Sigmoid colon (tissue), 7 donors: ENCODE measurements at regions of chr11 and their contacts with region 1.

Region 1: GRCh38 chr11:65274735-65275682 is 13.2 kb downstream of the POLA2 start:
- DNase-seq: peak; percentile 93
- H3K4me3 ChIP-seq: no peak overlapping the region
- H3K27ac ChIP-seq: peak overlapping the region in 2 of 4 donors; percentile 32 to 58
- H3K4me1 ChIP-seq: peaks cover 0 to 39% (median 33%) of the 10 kb centered on the region in 4 donors
- H3K27me3 ChIP-seq: no peaks in the 10 kb centered on the region
- CTCF ChIP-seq: peak; percentile 77 to 93 (median 90)
- EP300 ChIP-seq: no peak
- POLR2A ChIP-seq: no peak

Region 2: GRCh38 chr11:65314501-65315203 is 39.6 kb after region 1 on chr11 and contains the start of gene CDC42EP2:
- intact Hi-C with region 1: loop called (anchors 1 kb)
- DNase-seq: peak; percentile 94
- H3K4me3 ChIP-seq: peak within 1 kb of the TSS; percentile 78 to 94 (median 82)
- H3K27ac ChIP-seq: peak within 1 kb of the TSS; percentile 95 to 98 (median 98)
- H3K4me1 ChIP-seq: peaks cover 0 to 79% (median 66%) of the 10 kb centered on the region in 4 donors
- H3K27me3 ChIP-seq: no peaks in the 10 kb centered on the region
- CTCF ChIP-seq: no peak
- EP300 ChIP-seq: no peak
- POLR2A ChIP-seq: peak; percentile 65 to 73
- total RNA-seq, gene CDC42EP2: 11.0 to 29.1 (median 16.5) TPM

Region 3: DNA sequence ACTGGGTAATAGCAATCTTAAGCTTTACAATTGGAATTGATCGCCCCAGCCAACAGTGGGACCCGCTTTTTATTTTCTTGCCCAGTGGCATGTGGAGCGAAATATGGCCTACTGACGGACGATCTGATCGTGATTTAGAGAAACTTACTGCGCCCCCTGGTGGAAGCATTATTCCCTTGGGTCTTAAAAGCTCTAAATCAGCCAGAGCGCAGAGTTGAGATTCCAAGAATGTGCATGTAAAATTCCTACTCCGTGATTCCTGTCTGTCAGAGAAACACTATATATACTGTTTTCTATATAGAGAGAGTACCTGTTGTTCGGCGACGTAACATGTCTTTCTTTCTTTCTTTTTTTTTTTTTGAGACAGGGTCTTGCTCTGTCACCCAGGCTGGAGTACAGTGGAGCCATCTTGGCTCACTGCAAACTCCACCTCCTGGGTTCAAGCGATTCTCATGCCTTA is 55.0 kb after region 1 on chr11:
- intact Hi-C with region 1: loop called (anchors 1 kb)
- DNase-seq: peak; percentile 95
- H3K4me3 ChIP-seq: no peak overlapping the region
- H3K27ac ChIP-seq: peak overlapping the region in 1 of 4 donors; percentile 2
- H3K4me1 ChIP-seq: peaks cover 0 to 18% (median 10%) of the 10 kb centered on the region in 4 donors
- H3K27me3 ChIP-seq: no peaks in the 10 kb centered on the region
- CTCF ChIP-seq: peak; percentile 65 to 87 (median 76)
- EP300 ChIP-seq: no peak
- POLR2A ChIP-seq: no peak

Region 4: DNA sequence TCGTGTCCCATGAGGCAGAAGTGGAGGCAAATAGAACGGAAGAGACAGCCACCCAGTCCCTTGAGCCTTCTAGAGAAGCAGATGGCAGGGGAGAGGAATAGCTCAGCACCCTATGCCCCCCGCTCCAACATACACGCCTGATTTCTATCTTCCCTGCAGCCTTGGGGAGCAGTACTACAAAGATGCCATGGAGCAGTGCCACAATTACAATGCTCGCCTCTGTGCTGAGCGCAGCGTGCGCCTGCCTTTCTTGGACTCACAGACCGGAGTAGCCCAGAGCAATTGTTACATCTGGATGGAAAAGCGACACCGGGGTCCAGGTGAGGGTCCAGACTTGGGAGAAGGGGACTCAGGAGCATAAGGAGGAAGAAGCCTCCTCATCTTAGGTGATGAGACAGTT is 65.2 kb after region 1 on chr11:
- intact Hi-C with region 1: no loop called
- DNase-seq: no peak
- H3K4me3 ChIP-seq: no peak overlapping the region
- H3K27ac ChIP-seq: no peak overlapping the region
- H3K4me1 ChIP-seq: peaks cover 0 to 39% (median 17%) of the 10 kb centered on the region in 4 donors
- H3K27me3 ChIP-seq: no peaks in the 10 kb centered on the region
- CTCF ChIP-seq: no peak
- EP300 ChIP-seq: no peak
- POLR2A ChIP-seq: no peak